ENCODE measurements at regions of chr3 and their contacts with region 1.

Region 1: DNA sequence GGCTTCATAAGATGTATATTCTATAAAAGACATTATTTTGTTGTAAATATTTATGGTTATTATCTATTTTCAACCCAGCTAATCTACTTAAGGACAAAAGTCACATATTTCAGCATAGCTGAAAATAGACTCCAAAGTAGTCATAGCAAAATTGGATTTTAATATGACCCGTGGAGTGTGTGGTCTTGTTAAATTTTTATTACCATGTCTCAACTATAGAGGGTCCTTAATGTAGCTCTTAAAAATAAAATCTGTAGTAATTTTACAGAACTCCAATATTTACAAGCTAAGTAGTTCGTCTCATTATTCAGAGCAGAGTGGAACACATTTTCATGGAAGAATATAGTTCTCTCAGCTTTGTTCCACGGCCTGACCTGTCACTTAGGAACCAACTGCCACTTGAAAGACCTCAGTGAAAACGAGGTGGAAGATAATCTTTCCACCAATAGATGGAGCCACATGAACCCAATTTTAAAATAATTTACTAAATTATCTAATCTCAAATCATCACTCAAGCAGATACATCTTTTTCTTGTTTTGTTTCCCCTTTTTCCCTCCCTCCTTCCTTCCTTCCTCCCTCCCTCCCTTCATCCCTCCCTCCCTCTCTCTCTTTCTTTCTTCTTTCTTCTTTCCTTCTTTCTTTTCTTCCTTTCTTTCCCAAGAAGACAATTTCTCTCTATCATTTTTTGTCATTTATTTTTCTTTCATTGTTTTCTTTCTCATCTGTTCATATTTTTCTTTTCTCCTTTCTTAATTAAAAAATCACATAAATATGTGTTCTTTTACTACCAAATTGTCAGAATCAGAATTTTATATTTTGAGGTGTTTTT is 97.2 kb downstream of the CLDN1 start:
- DNase-seq: no peak
- ATAC-seq: no peak
- H3K4me3 ChIP-seq: no peak overlapping the region
- H3K27ac ChIP-seq: no peak overlapping the region
- H3K4me1 ChIP-seq: no peaks in the 10 kb centered on the region
- H3K27me3 ChIP-seq: no peaks in the 10 kb centered on the region

Region 2: DNA sequence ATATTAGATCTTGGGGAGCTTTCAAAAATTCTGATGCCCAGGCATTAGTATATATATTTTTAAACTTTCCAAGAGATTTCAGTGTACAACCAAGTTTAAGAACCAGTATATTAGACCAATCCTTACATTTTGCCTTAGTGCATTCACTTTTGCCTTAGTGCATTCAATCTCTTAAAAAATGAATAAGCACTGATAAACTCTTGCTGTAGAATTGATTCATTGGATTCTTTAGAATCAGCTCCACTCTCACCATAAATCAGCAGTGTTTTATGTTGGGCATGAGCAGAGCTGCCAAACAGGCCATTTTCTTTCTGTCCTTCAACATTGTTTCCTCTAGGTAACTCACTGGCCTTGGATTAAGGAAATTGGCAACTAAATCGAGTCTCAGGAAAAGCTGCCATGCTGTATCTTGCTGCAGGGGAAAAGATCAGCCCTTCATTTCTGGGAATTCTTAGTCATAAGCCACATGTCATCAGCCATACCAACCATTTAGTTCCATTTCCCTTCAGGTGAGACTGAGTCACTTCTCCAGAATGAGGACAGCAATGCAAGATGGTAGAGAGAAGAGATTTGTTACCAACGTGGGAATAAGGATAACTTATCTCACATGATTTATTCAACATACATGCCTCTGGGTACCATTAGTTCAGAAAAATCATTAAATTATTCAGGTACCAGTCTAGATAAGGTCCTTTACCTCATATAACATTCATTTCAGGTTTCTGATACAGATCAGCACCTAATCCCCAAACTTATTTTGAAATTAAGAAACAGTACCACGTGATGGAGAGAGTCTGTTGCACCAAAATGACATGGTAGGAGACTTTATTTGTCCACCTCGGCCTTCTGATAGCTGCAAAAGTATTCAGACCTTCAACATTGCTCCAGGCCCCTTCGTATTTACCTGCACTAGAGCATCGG is 296.8 kb before region 1 on chr3:
- intact Hi-C with region 1: no loop called
- DNase-seq: no peak
- ATAC-seq: no peak
- H3K4me3 ChIP-seq: no peak overlapping the region
- H3K27ac ChIP-seq: no peak overlapping the region
- H3K4me1 ChIP-seq: no peaks in the 10 kb centered on the region
- H3K27me3 ChIP-seq: no peaks in the 10 kb centered on the region

Region 3: GRCh38 chr3:190321789-190322603 is 96.9 kb after region 1 on chr3 and contains the start of gene CLDN1:
- intact Hi-C with region 1: loop called in 2 of 4 experiments (anchors 5 to 10 kb)
- DNase-seq: peak; percentile 84 to 93 (median 92)
- ATAC-seq: peak; percentile 94 to 95
- H3K4me3 ChIP-seq: peak within 1 kb of the TSS; percentile 59
- H3K27ac ChIP-seq: no peak within 1 kb of the TSS
- H3K4me1 ChIP-seq: no peaks in the 10 kb centered on the region
- H3K27me3 ChIP-seq: no peaks in the 10 kb centered on the region
- total RNA-seq, gene CLDN1: 1.2 to 2.0 (median 1.3) TPM

Region 4: GRCh38 chr3:190384241-190384863 is 159.3 kb after region 1 on chr3:
- intact Hi-C with region 1: loop called in 1 of 4 experiments (anchors 5 kb)
- DNase-seq: peak in 1 of 3 donors; percentile 31
- ATAC-seq: peak; percentile 55 to 80
- H3K4me3 ChIP-seq: no peak overlapping the region
- H3K27ac ChIP-seq: no peak overlapping the region
- H3K4me1 ChIP-seq: no peaks in the 10 kb centered on the region
- H3K27me3 ChIP-seq: no peaks in the 10 kb centered on the region

Measured in right cardiac atrium (tissue), 5 donors.